IMR-90 (cell line): ENCODE measurements at regions of chr1 and their contacts with region 1.

Region 1: GRCh38 chr1:53393325-53393792 is 65.5 kb upstream of the LRP8 start:
- DNase-seq: peak; percentile 59
- ATAC-seq: peak; percentile 97
- H3K4me3 ChIP-seq: no peak overlapping the region
- H3K27ac ChIP-seq: no peak overlapping the region
- H3K4me1 ChIP-seq: no peaks in the 10 kb centered on the region
- H3K27me3 ChIP-seq: peaks cover 28% of the 10 kb centered on the region
- CTCF ChIP-seq: peak; percentile 92
- POLR2A ChIP-seq: peak; percentile 33; the same call in 1 of the 2 replicates
- RAD21 ChIP-seq: peak; percentile 93

Region 2: DNA sequence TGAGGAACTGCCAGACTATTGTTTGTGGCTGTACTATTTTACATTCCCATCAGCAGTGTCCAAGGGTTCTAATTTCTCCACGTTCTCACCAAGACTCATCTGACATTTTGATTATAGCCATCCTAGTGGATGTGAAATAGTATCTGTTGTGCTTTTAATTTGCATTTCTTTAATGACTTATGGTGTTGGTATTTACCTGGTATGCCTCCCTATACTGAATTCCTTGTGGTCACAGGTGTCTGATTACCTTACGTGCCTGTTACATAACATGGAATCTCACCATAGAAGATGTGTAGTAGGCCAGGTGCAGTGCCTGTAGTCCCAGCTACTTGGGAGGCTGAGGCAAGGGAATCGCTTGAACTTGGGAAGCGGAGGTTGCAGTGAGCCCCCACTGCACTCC is 537.3 kb before region 1 on chr1:
- CTCF ChIA-PET with region 1: no interaction called
- POLR2A ChIA-PET with region 1: no interaction called
- dilution Hi-C with region 1: no loop called
- in situ Hi-C with region 1: no loop called
- intact Hi-C with region 1: no loop called
- DNase-seq: no peak
- ATAC-seq: no peak
- H3K4me3 ChIP-seq: no peak overlapping the region
- H3K27ac ChIP-seq: no peak overlapping the region
- H3K4me1 ChIP-seq: no peaks in the 10 kb centered on the region
- H3K27me3 ChIP-seq: no peaks in the 10 kb centered on the region
- CTCF ChIP-seq: no peak
- POLR2A ChIP-seq: no peak
- RAD21 ChIP-seq: no peak

Region 3: GRCh38 chr1:53278201-53278725 is 115.1 kb before region 1 on chr1:
- CTCF ChIA-PET with region 1: interaction called, 17 read pairs
- POLR2A ChIA-PET with region 1: no interaction called
- dilution Hi-C with region 1: no loop called
- in situ Hi-C with region 1: loop called (anchors 5 kb)
- intact Hi-C with region 1: loop called (anchors 1 kb)
- DNase-seq: peak; percentile 7
- ATAC-seq: peak; percentile 92
- H3K4me3 ChIP-seq: no peak overlapping the region
- H3K27ac ChIP-seq: no peak overlapping the region
- H3K4me1 ChIP-seq: no peaks in the 10 kb centered on the region
- H3K27me3 ChIP-seq: no peaks in the 10 kb centered on the region
- CTCF ChIP-seq: peak; percentile 94
- POLR2A ChIP-seq: no peak
- RAD21 ChIP-seq: peak; percentile 93

Region 4: DNA sequence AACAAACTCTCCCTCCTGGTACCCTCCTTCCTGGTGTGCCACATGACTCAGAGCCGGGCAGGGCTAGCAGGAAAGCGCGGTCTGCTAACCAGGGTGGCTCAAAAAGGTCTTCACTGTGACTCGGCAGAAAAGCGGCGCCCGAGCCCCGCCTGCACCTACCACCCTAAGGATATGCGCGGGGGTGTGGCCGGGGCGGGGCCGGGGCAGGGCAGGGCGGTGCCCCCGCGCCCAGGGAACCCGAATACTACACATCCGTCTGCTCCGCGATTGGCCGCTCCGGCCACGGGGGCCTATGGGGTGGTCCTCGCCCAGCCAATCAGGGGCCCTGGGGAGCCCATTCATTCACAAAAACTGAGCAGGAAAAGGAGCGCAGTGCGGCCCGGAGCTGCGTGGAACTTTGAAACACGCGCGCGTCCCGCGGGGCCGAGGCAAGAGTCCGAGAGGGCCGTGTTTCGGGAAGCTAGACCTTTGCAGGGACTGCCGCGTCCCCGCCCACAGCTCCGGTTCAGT is 67.2 kb before region 1 on chr1:
- CTCF ChIA-PET with region 1: no interaction called
- POLR2A ChIA-PET with region 1: no interaction called
- dilution Hi-C with region 1: no loop called
- in situ Hi-C with region 1: no loop called
- intact Hi-C with region 1: loop called (anchors 5 kb)
- DNase-seq: peak; percentile 77
- ATAC-seq: peak; percentile 93
- H3K4me3 ChIP-seq: peak overlapping the region; percentile 54
- H3K27ac ChIP-seq: peak overlapping the region; percentile 26; the same call in 1 of the 2 replicates
- H3K4me1 ChIP-seq: peaks cover 4% of the 10 kb centered on the region
- H3K27me3 ChIP-seq: no peaks in the 10 kb centered on the region
- CTCF ChIP-seq: no peak
- POLR2A ChIP-seq: peak; percentile 63; the same call in 1 of the 2 replicates
- RAD21 ChIP-seq: no peak

Region 5: DNA sequence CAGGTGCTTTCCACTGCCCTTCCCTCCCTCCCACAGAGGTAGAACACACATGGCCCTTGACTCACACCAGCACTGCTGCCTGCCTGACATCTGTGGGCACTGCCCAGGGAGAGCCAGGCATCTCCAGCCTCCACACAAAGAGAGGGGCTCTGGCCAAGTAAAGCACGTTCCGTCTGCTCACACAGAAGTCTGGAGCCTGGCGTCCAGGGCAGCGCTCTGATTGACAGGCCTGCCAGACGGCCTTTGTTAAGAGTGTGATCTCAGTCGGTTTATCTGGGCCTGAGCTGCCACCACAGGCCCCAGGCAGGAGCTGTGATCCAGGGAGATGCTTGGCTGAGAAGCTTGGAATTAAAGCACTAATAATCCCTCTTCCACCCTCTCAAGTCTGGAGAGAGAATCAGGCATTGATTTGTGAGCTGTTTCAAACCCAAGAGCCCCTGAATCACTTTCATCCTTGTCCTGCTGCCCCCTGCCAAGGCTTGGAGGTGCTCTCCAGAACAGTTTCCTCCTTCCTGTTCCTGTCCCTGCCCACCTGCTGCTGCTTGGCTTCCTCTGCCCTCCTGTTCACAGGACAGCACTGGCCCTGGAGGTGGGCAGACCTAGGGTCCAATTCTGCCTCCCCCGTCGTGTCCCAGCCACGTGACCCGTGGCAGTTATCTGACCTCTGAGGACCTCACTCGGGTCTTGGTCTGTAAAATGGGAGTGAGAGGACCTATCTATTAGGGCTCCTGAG is 69.6 kb after region 1 on chr1:
- CTCF ChIA-PET with region 1: no interaction called
- POLR2A ChIA-PET with region 1: no interaction called
- dilution Hi-C with region 1: no loop called
- in situ Hi-C with region 1: no loop called
- intact Hi-C with region 1: no loop called
- DNase-seq: no peak
- ATAC-seq: no peak
- H3K4me3 ChIP-seq: no peak overlapping the region
- H3K27ac ChIP-seq: no peak overlapping the region
- H3K4me1 ChIP-seq: no peaks in the 10 kb centered on the region
- H3K27me3 ChIP-seq: peaks cover 18% of the 10 kb centered on the region
- CTCF ChIP-seq: no peak
- POLR2A ChIP-seq: no peak
- RAD21 ChIP-seq: no peak

Region 6: DNA sequence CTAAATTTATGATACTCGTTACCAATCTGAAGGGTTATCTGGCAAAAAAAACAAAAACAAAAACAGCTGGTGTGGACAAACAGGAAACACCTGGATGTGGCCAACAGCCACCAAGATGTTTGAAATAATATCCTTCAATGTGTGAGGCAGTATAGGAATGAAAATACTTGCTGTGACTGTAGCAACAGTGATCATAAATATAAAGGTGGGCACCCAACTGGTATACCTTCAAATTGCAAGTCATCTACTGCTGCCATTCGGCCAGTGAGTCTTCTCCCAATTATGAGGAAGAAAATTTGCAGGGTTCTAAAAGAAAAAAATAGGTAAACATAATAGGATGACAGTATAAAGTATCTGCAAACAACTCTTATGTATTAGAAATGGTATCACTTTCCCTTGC is 495.3 kb after region 1 on chr1:
- CTCF ChIA-PET with region 1: no interaction called
- POLR2A ChIA-PET with region 1: no interaction called
- dilution Hi-C with region 1: no loop called
- in situ Hi-C with region 1: no loop called
- intact Hi-C with region 1: no loop called
- DNase-seq: no peak
- ATAC-seq: no peak
- H3K4me3 ChIP-seq: peak overlapping the region; percentile 97; the same call in 1 of the 2 replicates
- H3K27ac ChIP-seq: no peak overlapping the region
- H3K4me1 ChIP-seq: peaks cover 3% of the 10 kb centered on the region
- H3K27me3 ChIP-seq: no peaks in the 10 kb centered on the region
- CTCF ChIP-seq: no peak
- POLR2A ChIP-seq: no peak
- RAD21 ChIP-seq: no peak